ENCODE measurements at regions of chr17 and their contacts with region 1.

Region 1: GRCh38 chr17:20121359-20122253 is 112.4 kb downstream of the SPECC1 start:
- DNase-seq: no peak
- ATAC-seq: peak; percentile 61

Region 2: GRCh38 chr17:19992803-19993713 is 128.5 kb before region 1 on chr17:
- intact Hi-C with region 1: loop called (anchors 2 kb)
- DNase-seq: peak; percentile 94
- ATAC-seq: peak; percentile 98

Region 3: GRCh38 chr17:20009302-20010098 is 112.1 kb before region 1 on chr17 and contains the start of gene SPECC1:
- intact Hi-C with region 1: loop called (anchors 5 kb)
- DNase-seq: peak; percentile 91
- ATAC-seq: peak; percentile 97
- total RNA-seq, gene SPECC1: 10.5 TPM

Region 4: DNA sequence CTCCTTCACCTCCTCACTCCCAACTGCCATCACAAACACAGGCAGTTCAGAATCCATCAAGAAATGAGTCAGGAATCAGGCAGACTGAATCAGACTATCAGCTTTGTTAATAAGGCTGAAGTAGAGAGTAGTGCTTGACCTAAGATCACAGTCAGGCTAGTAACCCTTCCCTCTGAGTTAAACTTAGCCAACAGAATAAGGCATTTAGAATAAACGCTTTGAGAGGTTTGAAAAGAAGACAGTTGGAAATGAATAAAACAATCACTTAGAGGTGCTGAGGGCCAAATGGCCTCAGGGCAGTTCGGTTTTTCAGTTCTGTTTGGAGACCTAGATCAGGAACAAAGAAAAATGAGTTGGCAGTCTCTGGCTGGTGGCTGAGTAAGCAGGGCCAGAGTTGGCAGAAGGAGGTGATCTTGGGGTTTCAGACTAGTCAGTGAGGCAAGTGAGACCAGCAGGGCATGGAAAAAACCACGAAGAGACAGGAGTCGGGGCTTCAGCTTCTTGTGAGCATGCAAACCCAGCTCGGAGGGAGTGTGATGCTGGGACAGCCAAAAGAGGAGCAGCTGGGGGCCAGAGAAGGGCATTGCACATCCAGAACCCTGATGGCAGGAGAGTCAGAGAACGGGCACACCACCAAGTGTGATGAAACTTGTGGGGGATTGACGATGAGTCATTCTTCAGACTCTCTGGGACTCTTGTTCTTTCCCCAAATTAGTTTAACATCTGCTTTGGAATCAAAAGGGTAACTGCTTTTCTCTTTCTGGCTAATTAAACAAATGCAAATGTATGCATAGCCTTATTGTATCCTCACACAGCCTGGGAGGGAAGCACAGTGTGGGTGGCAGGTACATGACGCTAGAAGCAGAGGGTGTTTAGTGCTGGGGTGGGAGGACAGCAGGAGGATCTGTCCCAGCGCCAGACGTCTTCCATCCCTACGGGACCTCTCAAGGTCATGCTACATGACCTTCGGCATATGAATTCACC is 57.6 kb before region 1 on chr17:
- intact Hi-C with region 1: no loop called
- DNase-seq: peak; percentile 85
- ATAC-seq: peak; percentile 89

Region 5: DNA sequence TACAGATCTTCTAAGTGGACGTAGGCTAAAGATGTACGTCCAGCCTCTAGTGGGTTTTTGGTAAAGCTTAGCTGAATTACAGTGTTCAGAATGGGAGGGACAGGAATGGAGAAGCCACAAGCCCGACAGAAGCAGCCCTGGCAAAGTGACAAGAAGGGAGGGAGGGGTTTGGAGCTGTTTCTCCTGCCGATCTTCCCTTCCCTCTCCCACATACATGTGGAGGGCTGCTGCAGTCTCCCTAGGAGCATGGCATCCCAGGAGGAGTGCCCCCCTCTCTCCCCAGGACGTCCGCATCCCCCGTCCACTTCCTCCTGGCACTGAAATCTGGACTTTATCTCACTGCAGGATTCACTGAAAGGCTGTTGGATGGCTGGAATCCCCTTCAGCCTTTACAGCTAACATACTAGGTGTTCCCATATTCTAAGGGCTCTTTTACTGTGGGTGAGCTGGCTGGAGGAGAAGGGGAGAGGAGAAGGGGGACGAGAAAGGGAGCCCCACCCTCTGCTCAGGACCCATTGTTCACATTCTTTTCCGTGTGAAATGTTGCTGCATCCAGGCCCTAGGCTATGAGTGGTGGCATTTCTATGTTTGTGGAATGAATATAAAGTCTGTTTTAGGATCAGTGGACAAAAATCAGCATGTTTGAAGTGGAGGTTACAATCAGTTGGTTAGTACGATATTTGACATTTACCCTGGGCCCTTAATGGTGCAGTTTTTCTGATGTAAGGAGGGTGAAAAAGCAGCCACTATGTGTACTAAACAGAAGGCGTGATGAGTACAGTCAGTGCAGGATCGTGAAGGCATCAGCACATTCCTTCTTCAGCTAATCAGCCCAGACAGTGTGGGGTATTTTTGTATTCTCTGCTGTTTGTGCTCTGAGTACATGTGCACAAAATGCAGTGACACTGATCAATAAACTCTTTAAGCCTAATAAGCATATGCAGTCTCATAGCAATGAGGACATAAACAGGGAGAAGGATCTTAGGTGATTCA is 17.9 kb before region 1 on chr17:
- intact Hi-C with region 1: no loop called
- DNase-seq: no peak
- ATAC-seq: peak; percentile 16

Region 6: GRCh38 chr17:20200016-20200795 is 78.6 kb after region 1 on chr17:
- intact Hi-C with region 1: no loop called
- DNase-seq: no peak
- ATAC-seq: no peak

Region 7: DNA sequence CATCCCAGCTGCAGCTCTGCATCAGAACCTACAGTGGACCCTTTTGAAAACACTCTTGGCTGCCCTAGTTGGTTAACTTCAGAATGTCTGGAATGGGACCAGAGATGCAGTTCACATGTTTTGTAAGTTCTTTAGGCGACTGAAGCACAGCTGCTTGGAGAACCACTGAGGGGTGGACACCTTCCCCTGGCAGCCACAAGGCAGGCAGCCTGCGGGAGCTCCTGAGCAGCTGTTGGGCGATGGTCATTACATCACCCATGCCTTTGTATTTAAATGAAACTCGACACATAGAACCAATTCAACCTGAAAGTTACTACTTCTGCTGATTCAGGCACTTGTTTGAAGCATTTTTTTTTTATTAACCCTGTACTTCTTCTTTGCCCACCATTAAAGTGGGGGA is 194.2 kb after region 1 on chr17:
- intact Hi-C with region 1: loop called (anchors 2 kb)
- DNase-seq: no peak
- ATAC-seq: no peak